ENCODE measurements at regions of chr7 and their contacts with region 1.

Region 1: GRCh38 chr7:114663502-114663901 is 248.9 kb downstream of the FOXP2 start:
- DNase-seq: peak; percentile 47 to 62
- H3K4me3 ChIP-seq: no peak overlapping the region
- H3K4me1 ChIP-seq: peaks cover 39% of the 10 kb centered on the region
- H3K27me3 ChIP-seq: no peaks in the 10 kb centered on the region

Region 2: DNA sequence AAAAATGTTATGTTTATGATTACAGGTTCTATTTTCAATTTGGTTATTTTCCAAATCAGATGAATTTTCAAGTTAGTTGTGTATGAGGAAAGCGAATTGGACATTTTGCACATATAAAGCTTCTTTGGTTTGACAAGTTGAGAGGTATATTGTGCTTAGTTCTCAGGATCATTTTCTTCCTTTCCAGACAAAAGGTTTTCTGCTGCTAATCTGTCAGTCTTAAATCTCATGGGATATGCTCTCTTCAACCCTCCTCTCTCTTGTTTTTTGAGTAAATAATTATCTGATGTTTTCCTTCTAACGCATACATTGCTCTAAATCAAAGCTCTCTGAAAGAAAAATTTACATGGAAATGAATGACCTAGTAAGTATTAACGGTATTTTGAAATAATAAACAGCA is 822.5 kb before region 1 on chr7:
- in situ Hi-C with region 1: no loop called
- DNase-seq: no peak
- H3K4me3 ChIP-seq: no peak overlapping the region
- H3K4me1 ChIP-seq: no peaks in the 10 kb centered on the region
- H3K27me3 ChIP-seq: no peaks in the 10 kb centered on the region; the same call in 1 of the 2 replicates

Region 3: GRCh38 chr7:114085592-114086501 is 577.7 kb before region 1 on chr7:
- in situ Hi-C with region 1: loop called (anchors 25 kb)
- DNase-seq: peak; percentile 28 to 69
- H3K4me3 ChIP-seq: peak overlapping the region; percentile 34
- H3K4me1 ChIP-seq: no peaks in the 10 kb centered on the region; the same call in 1 of the 2 replicates
- H3K27me3 ChIP-seq: peaks cover 64% of the 10 kb centered on the region

Region 4: DNA sequence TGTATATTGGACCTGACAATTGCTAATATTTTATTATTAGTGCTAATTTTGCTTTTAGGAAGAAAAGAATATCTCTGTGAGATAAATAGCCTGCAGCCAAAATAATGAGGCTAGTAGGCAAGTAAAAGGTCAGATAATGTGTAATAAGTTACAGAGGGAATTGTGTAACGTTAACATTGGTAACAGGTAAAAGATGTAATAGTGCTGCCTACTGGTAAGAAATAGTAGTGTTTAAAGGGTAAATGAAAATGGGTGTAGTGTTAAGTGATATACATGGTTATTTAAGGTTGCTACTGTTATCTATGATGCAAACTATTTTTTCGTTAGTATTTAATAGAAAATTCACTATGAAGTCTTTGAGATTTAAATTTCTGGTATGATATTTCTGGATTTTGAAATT is 258.1 kb before region 1 on chr7:
- in situ Hi-C with region 1: loop called (anchors 25 kb)
- DNase-seq: peak in 1 of 2 experiments; percentile 28
- H3K4me3 ChIP-seq: no peak overlapping the region
- H3K4me1 ChIP-seq: no peaks in the 10 kb centered on the region
- H3K27me3 ChIP-seq: peaks cover 8% of the 10 kb centered on the region

Region 5: DNA sequence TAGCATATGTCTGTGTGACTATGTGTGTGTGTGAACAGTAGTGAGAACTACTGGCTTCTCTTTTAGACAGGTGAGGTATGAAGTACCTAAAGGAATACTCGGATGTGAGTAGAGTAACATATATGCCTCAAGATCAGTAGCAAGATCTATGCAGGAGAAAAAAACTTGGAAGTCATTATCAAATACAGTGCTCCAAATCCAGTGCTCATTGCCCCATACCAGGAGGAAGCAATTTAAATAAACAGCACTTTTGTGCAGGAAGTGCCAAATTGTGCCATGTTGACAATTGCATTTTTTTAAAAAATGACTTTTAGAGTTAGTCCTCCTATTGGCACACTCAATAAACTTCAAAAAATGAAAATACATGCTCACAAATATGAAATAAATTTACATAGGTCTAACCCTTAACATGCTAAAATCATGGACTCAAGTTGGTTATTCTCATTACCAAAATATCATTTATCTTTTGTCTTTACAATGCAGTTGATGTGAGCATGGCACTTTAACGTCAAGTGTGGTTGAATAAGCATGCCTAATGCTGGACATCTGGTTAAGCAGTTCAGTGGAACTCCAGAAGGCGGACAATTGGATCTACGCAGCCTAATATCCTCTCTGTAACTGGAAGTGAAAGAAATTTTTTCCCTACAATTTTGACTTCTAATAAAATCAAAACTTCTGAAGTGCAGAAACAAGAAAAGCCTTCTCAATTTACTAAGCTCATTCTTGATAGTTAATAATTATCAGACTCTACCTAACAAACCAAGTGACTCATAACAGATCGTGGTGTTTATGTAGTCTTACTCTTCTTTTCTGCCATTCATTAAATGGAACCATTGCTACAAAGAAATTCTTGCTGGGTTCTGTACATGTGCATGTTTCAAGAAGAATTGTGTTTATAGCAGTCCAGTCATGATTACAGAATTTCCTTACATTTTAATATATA is 453.5 kb after region 1 on chr7:
- in situ Hi-C with region 1: no loop called
- DNase-seq: no peak
- H3K4me3 ChIP-seq: no peak overlapping the region
- H3K4me1 ChIP-seq: no peaks in the 10 kb centered on the region
- H3K27me3 ChIP-seq: no peaks in the 10 kb centered on the region; the same call in 1 of the 2 replicates

Measured in HAP-1 (cell line).